HEK293T (cell line): ENCODE measurements at regions of chr16 and their contacts with region 1.

Region 1: GRCh38 chr16:66911112-66911511 is 7.6 kb downstream of the CDH16 start:
- DNase-seq: no peak

Region 2: DNA sequence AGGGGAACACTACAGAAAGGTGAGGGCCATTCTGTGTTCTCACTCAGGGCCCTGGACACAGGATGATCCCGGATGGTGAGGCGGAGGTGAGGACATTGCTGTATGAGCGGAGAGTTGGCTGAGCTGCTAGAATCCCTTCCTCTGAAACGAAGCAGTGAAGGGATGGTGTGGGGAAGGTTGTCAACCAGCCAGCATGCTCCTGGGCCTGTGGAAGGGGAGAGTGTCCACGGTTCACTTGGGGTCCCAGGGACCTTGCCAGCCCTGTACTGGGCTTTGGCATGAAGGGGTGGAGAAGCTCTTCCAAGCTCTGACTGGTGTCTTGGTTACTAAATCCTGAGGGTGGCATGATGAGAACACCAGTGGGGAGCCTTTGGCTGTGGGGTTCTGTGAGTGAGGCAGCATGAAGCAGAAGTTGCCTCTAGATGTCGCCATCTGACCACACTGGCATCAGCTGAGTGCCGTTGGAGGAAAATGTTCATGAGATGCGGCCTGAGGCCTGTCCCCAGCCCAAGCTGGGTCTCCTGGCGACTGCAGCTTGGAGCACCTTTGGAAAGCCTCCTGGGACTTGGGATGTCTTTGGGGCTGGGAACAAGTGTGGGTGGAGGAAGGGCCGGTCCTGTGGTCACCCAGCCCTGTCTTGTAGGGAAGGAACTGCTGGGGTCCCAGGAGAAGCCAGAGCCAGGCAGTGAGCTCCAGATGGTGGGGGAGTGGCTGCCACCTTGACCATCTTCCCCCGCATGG is 16.0 kb before region 1 on chr16:
- CTCF ChIA-PET with region 1: interaction called, 12 read pairs
- POLR2A ChIA-PET with region 1: no interaction called
- DNase-seq: peak; percentile 75

Region 3: DNA sequence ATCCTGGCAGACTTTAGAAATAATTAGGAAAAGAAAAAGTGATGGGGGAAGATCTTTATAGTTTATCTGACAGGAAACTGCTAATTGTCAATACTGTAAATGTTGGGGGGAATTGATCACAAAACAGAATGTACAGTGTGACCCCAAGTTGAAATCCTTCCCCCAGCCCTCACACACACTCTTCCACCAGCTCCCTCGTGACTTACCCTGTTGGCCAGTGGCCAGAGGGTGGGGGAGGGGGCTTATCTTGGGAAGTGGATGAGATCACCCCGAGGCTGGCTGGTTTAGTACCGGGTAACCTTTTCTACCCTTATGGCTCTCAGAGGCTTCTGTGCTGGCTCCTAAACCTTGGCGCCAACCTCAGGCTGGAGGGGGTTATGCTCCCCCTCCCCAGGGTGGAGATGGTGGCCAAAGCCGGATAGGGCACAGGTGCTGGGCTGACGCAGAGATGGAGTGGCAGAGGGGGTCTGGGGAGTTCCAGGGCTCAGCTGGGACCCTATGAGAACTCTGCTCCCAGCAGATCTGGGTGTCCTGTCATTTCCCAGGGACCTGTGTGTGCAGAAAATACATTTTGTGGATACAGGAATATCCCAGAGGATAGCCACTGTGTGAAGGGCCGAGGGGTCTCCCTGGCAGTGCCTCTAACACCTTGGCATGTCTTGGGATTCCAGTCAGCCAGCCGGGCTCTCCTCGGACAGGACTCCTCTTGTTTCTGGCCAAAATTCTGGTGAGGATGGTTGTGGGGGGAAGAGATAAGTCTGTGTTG is 11.0 kb before region 1 on chr16:
- CTCF ChIA-PET with region 1: interaction called, 12 read pairs
- POLR2A ChIA-PET with region 1: no interaction called
- DNase-seq: peak; percentile 57

Region 4: DNA sequence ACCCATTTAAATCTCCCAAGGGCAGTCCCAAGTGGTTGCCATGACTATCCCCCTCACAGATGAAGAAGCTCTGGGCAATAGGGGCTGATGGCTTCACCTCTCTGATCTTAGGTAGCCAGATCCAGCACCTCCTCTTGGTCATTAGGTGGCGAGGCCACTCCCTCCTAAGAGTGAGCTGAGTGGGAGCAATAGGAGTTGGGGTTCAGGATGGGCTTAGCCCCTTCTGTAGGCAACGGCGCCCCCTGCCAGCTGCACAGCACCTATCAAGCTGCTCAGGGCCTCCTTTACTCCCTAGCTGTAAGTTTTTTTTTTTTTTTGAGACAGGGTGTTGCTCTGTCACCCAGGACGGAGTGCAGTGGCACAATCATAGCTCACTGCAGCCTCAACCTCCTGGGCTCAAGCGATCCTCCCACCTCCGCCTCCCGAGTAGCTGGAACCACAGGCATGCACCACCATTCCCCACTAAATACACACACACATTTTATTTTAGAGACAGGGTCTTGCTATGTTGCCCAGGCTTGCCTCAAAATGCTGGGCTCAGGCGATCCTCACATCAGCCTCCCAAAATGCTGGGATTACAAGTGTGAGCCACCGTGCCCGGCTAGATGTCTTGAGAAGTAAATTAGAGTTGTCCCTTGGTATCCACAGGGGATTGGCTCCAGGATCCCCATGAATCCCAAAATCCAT is 17.7 kb after region 1 on chr16:
- CTCF ChIA-PET with region 1: interaction called, 11 read pairs
- POLR2A ChIA-PET with region 1: interaction called, 8 read pairs
- DNase-seq: no peak